ENCODE measurements at regions of chr1 and their contacts with region 1.

Region 1: GRCh38 chr1:21368515-21369289 is 71.2 kb upstream of the NBPF3 start:
- DNase-seq: peak; percentile 86
- H3K4me3 ChIP-seq: no peak overlapping the region
- H3K27ac ChIP-seq: no peak overlapping the region
- H3K4me1 ChIP-seq: no peaks in the 10 kb centered on the region
- H3K27me3 ChIP-seq: no peaks in the 10 kb centered on the region
- CTCF ChIP-seq: peak; percentile 98

Region 2: GRCh38 chr1:21255278-21255942 is 113.3 kb before region 1 on chr1:
- CTCF ChIA-PET with region 1: interaction called, 48 read pairs
- POLR2A ChIA-PET with region 1: no interaction called
- intact Hi-C with region 1: loop called (anchors 1 kb)
- DNase-seq: peak; percentile 90
- H3K4me3 ChIP-seq: no peak overlapping the region
- H3K27ac ChIP-seq: no peak overlapping the region
- H3K4me1 ChIP-seq: peaks cover 7% of the 10 kb centered on the region
- H3K27me3 ChIP-seq: no peaks in the 10 kb centered on the region
- CTCF ChIP-seq: peak; percentile 90

Region 3: DNA sequence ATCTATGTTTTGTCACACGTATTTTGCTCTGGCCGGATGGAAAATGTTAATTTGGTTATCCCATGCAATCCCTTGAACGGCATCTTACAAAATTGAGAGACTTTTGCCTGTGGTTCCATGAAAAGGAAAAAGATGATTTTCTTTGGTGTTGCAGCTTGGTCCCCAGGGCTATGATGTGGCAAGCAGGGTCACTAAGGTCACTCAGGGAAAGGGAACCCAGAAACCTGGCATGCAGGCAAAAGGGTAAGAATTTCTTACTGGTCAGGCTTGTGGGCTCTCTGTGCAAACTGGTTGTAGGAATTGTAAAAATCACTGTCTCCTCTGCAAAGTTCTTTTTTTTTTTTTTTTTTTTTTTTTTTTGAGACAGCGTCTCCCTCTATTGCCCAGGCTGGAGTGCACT is 22.8 kb after region 1 on chr1:
- CTCF ChIA-PET with region 1: interaction called, 3 read pairs
- POLR2A ChIA-PET with region 1: interaction called, 13 read pairs
- intact Hi-C with region 1: no loop called
- DNase-seq: no peak
- H3K4me3 ChIP-seq: no peak overlapping the region
- H3K27ac ChIP-seq: no peak overlapping the region
- H3K4me1 ChIP-seq: no peaks in the 10 kb centered on the region
- H3K27me3 ChIP-seq: no peaks in the 10 kb centered on the region
- CTCF ChIP-seq: no peak

Region 4: DNA sequence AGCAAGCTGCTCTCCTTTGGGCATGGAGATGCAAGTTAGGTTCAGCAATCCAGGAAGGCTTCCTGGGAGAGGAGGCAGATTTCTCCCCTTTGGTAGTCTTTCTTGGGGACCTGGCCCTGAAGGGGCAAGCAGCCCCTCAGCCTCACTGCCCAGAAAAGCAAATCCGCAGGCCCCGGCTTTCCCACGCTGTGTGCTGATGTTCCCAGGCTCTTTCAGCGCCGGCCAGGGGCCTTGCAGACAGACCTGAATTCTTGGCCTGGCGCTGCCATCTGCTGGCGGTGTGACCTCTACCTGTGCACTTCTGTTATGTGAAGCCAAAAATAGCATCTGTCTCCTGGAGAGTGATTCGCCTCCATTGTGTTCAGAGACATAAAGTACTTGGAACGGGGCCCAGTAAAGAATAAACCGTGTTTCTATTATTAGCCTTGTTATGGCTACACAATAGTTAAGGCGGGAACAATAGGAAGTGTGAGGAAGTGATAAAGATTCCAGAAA is 205.3 kb after region 1 on chr1:
- CTCF ChIA-PET with region 1: interaction called, 7 read pairs
- POLR2A ChIA-PET with region 1: no interaction called
- intact Hi-C with region 1: loop called (anchors 5 kb)
- DNase-seq: peak; percentile 80
- H3K4me3 ChIP-seq: no peak overlapping the region
- H3K27ac ChIP-seq: no peak overlapping the region
- H3K4me1 ChIP-seq: peaks cover 12% of the 10 kb centered on the region
- H3K27me3 ChIP-seq: no peaks in the 10 kb centered on the region
- CTCF ChIP-seq: peak; percentile 80

Region 5: GRCh38 chr1:22491995-22492715 is 1123.5 kb after region 1 on chr1:
- CTCF ChIA-PET with region 1: no interaction called
- POLR2A ChIA-PET with region 1: interaction called, 14 read pairs
- intact Hi-C with region 1: no loop called
- DNase-seq: no peak
- H3K4me3 ChIP-seq: no peak overlapping the region
- H3K27ac ChIP-seq: no peak overlapping the region
- H3K4me1 ChIP-seq: peaks cover 8% of the 10 kb centered on the region
- H3K27me3 ChIP-seq: no peaks in the 10 kb centered on the region
- CTCF ChIP-seq: no peak

Measured in A673 (cell line).